ENCODE measurements at regions of chr12 and their contacts with region 1.

Region 1: GRCh38 chr12:57632694-57633477 is at the start of gene B4GALNT1:
- DNase-seq: peak; percentile 65
- ATAC-seq: peak; percentile 80
- H3K4me3 Mint-ChIP-seq: peak within 1 kb of the TSS; percentile 50
- H3K27ac Mint-ChIP-seq: no peak within 1 kb of the TSS
- H3K4me1 Mint-ChIP-seq: peaks cover 15% of the 10 kb centered on the region
- H3K27me3 Mint-ChIP-seq: peaks cover 56% of the 10 kb centered on the region
- total RNA-seq, gene B4GALNT1: 0.84 to 0.99 TPM

Region 2: DNA sequence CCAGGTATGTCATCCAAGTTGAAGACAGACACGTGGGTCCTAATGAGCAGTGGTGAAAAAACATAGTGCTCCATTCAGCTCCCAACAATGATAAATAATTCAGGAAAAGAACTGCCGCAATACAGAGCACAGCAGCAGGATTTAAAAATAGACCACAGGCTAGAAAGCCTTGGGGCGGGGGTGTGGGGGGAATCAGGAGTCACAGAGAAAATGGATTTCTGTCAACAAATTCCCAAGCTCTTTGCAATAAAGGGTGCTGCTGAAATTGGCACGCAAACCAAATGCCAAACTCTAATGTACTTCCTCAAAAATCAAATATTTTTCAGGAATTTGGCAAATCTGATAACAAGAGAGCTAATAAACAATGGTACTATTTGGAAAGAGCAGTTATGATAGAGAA is 260.7 kb before region 1 on chr12:
- CTCF ChIA-PET with region 1: no interaction called
- POLR2A ChIA-PET with region 1: no interaction called
- DNase-seq: no peak
- ATAC-seq: no peak
- H3K4me3 Mint-ChIP-seq: no peak overlapping the region
- H3K27ac Mint-ChIP-seq: no peak overlapping the region
- H3K4me1 Mint-ChIP-seq: no peaks in the 10 kb centered on the region
- H3K27me3 Mint-ChIP-seq: no peaks in the 10 kb centered on the region

Region 3: GRCh38 chr12:57614178-57614947 is 18.5 kb before region 1 on chr12:
- CTCF ChIA-PET with region 1: interaction called, 10 read pairs
- POLR2A ChIA-PET with region 1: no interaction called
- DNase-seq: no peak
- ATAC-seq: no peak
- H3K4me3 Mint-ChIP-seq: no peak overlapping the region
- H3K27ac Mint-ChIP-seq: no peak overlapping the region
- H3K4me1 Mint-ChIP-seq: peaks cover 15% of the 10 kb centered on the region
- H3K27me3 Mint-ChIP-seq: peaks cover 71% of the 10 kb centered on the region

Measured in activated CD8-positive, alpha-beta T cell treated with anti-CD3 and anti-CD28 coated beads, Interleukin-2, amount 10 ng/mL, durations not matched to agents 7 days and 5 days (primary cell).